Uterus (tissue), 4 donors: ENCODE measurements at regions of chr16 and their contacts with region 1.

Region 1: DNA sequence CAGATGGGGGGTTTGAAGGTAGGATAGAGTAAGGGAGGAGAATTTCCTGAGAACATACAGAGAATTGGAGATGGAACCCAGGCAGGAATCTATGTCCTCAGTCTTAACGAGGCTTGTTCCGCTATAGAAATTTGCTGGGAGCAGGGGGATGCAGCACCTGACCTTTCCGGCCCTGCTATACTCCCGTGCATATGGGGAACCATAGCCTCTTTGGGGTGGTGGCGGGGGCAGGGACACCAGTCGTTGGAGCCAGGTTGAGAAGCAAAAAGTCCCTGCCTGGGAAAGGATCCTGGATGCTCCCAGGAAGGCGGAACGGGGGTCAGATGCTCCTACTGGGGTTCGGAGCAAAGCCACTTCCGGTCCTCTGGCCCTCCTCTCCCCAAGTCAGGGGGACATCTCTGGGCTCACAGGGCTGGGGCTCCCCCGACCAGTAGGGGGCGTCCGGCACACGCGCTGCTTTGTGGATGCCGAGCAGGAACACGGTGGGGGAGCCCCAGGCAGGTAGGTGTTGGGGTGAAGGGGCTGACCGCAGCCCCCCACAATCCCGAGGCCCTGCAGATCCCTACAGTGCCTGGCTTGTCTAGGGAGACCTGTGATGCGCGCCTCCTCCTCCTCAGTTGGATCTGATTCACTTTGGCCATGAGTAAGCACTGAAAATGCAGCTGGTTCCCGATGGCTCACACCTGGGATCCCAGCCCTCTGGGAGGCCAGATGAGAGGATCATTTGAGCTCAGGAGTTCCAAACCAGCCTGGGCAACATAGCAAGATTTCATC is 15.5 kb upstream of the TFAP4 start:
- DNase-seq: peak; percentile 77 to 79
- H3K4me3 ChIP-seq: no peak overlapping the region
- H3K27ac ChIP-seq: no peak overlapping the region
- H3K4me1 ChIP-seq: peaks cover 2 to 7% of the 10 kb centered on the region in 2 donors
- H3K27me3 ChIP-seq: no peaks in the 10 kb centered on the region
- CTCF ChIP-seq: peak; percentile 94 to 97 (median 96)
- POLR2A ChIP-seq: no peak

Region 2: DNA sequence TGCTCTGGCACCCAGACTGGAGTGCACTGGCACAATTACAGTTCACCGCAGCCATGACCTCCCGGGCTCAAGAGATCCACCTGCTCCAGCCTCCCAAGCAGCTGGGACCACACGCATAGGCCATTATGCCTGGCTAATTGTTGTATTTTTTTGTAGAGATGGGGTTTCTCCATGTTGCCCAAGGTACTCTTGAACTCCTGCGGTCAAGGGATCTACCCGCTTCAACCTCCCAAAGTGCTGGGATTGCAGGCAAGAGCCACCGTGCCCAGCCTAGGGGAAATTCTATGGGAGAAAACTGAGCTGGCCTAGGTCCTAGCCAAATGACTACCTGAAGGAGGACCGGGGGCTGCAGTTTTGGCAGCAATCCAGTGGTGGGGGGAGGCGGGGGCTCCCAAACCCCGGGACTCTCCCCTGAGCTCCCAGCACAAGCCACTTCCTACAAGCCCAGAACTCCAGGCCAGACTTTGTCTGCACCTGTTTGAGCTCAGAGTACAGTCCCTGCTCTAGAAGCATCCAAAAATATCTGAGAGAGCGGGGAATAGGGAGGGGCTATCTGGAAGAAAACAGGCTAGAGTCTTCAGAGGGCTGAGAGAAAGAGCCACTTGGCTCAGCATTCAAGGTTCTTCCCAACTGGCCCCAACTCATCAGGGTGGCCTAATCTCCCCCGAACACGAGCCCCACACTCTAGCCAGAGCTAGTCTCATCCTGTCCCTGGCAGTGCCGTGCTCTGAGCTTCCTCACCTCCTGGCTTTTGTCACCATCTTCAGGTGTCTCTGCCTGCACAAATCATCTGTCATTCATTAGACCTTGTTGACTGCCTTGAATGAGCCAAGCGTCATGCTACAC is 55.6 kb before region 1 on chr16:
- intact Hi-C with region 1: no loop called
- DNase-seq: no peak
- H3K4me3 ChIP-seq: no peak overlapping the region
- H3K27ac ChIP-seq: no peak overlapping the region
- H3K4me1 ChIP-seq: no peaks in the 10 kb centered on the region
- H3K27me3 ChIP-seq: no peaks in the 10 kb centered on the region
- CTCF ChIP-seq: no peak
- POLR2A ChIP-seq: no peak

Region 3: DNA sequence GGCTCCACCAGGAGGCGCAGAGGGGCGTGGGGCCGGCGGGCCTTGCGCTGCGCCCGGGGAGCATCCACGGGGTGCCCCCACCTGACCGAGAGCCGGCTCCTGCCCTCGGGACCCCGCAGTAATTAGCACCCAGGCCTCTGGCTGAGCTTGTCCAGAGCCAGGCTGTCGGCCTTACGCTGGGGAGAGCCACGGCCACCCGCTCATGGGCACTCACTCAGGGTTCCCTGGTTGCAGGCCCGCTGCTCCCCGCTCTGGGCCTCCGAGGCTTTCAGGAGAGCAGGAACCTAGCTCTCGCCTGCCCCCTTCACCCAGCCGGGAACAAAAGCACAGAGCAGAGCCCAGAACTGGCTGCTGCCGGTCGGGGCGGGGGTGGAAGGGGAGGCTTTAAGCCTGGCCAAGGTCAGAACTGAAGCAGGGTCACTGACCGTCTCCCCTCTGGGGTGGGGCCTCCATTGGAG is 39.7 kb after region 1 on chr16:
- intact Hi-C with region 1: loop called (anchors 2 kb)
- DNase-seq: peak; percentile 83
- H3K4me3 ChIP-seq: peak overlapping the region; percentile 41 to 44
- H3K27ac ChIP-seq: peak overlapping the region; percentile 76 to 87
- H3K4me1 ChIP-seq: peaks cover 4 to 47% of the 10 kb centered on the region in 2 donors
- H3K27me3 ChIP-seq: no peaks in the 10 kb centered on the region
- CTCF ChIP-seq: peak; percentile 63 to 80 (median 69)
- POLR2A ChIP-seq: no peak

Region 4: DNA sequence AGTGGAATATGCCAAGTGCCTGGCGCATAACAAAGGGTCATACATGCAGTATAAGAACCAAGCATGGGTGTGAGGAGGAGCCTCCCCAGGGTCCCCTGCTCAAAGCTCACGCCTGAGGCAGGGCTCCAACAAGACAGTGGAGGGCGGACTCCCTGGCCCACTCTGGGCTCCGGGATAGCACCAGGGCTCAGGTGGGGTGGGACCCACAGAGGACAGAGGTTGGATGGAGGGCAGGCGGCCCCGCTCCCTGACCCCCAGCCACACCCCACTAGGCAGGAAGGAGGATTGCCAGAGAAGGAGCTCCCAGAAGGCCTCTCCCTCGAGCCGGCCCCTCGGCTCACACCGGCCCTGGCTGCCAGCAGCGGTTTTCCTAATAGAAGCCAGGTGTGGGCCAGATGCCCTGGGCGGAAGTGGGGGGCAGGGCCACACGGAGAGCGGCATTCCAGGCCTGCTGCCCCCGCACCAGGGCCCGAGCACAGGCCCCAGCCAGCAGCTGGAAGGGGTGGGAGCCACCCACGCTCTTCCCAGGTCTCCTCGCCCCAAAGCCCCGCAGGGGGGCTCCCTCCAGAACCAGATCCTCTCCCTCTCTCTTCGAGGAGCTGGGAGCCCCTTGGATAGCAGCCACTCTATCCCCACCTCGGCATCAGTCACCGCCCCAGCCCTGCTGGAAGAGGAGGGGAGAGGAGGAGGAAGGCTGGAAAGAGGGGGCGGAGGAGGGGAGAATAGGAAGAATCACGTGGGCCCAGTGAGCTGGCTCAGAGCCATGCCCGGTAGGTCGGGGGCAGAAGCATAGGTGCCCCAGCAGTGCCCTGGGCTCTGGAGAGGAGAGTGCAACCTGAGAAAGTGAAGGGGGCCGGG is 104.3 kb after region 1 on chr16:
- intact Hi-C with region 1: no loop called
- DNase-seq: peak; percentile 84 to 87
- H3K4me3 ChIP-seq: no peak overlapping the region
- H3K27ac ChIP-seq: peak overlapping the region; percentile 83 to 89
- H3K4me1 ChIP-seq: peaks cover 6 to 23% of the 10 kb centered on the region in 2 donors
- H3K27me3 ChIP-seq: no peaks in the 10 kb centered on the region
- CTCF ChIP-seq: no peak
- POLR2A ChIP-seq: no peak